ENCODE measurements at regions of chr10 and their contacts with region 1.

Region 1: DNA sequence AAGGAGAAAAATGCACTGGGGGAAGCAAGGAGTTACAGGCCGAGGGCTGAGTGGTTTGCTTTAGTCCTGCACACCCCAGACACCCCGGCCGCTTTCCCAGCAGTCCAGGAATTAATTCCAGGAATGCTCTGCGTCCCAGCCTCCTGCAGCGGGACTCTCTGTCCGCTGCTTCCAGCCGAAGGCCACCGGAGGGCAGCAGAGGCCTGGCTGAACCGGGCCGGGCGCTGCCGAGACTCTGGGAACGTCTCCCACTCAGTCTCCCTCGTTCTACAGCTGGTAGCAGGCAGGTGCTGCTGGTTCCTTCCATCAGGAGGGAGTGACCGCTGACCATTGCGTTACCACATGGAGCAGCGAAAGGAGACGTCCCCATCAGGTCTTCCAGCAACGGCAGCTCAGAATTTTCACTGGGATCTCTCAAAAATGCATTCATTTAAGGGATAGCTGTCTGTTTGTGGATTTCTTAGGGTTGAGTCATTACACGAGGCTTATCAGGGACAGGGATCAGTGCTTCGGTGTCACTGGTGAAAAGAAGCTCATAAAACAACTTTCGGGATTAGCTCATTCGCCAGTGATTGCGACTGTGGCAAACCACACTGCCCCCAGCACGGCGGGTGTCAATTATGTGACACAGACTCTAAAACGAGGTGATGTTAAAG is 24.9 kb upstream of the PITRM1 start:
- DNase-seq: peak; percentile 72 to 88 (median 84)
- H3K4me3 ChIP-seq: peak overlapping the region in 1 of 4 donors; percentile 33
- H3K27ac ChIP-seq: no peak overlapping the region
- H3K4me1 ChIP-seq: peaks cover 3 to 11% of the 10 kb centered on the region in 2 donors
- H3K27me3 ChIP-seq: peaks cover 13% of the 10 kb centered on the region
- CTCF ChIP-seq: peak; percentile 78 to 90 (median 84)
- POLR2A ChIP-seq: no peak

Region 2: GRCh38 chr10:4656576-4657182 is 1459.2 kb after region 1 on chr10:
- intact Hi-C with region 1: loop called in 1 of 2 experiments (anchors 10 kb)
- DNase-seq: peak; percentile 23 to 69 (median 39)
- H3K4me3 ChIP-seq: no peak overlapping the region
- H3K27ac ChIP-seq: no peak overlapping the region
- H3K4me1 ChIP-seq: no peaks in the 10 kb centered on the region
- H3K27me3 ChIP-seq: no peaks in the 10 kb centered on the region
- CTCF ChIP-seq: peak; percentile 66 to 88 (median 78)
- POLR2A ChIP-seq: no peak

Region 3: GRCh38 chr10:4767033-4767814 is 1569.7 kb after region 1 on chr10:
- intact Hi-C with region 1: loop called in 1 of 2 experiments (anchors 10 kb)
- DNase-seq: no peak
- H3K4me3 ChIP-seq: no peak overlapping the region
- H3K27ac ChIP-seq: no peak overlapping the region
- H3K4me1 ChIP-seq: peaks cover 0 to 5% of the 10 kb centered on the region in 2 donors
- H3K27me3 ChIP-seq: no peaks in the 10 kb centered on the region
- CTCF ChIP-seq: peak; percentile 18 to 62 (median 44)
- POLR2A ChIP-seq: no peak

Measured in adrenal gland (tissue), 19 donors.